B cell (primary cell): ENCODE measurements at regions of chr5 and their contacts with region 1.

Region 1: GRCh38 chr5:68215208-68215897 is at the start of gene PIK3R1:
- DNase-seq: peak; percentile 97
- ATAC-seq: peak; percentile 84
- H3K4me3 ChIP-seq: peak within 1 kb of the TSS; percentile 76 to 94 (median 88)
- H3K4me3 Mint-ChIP-seq: peak within 1 kb of the TSS; percentile 85
- H3K27ac ChIP-seq: peak within 1 kb of the TSS; percentile 90 to 92
- H3K27ac Mint-ChIP-seq: peak within 1 kb of the TSS; percentile 98
- H3K4me1 ChIP-seq: peaks cover 22 to 24% of the 10 kb centered on the region in 2 donors
- H3K4me1 Mint-ChIP-seq: peaks cover 44% of the 10 kb centered on the region
- H3K27me3 ChIP-seq: no peaks in the 10 kb centered on the region
- H3K27me3 Mint-ChIP-seq: no peaks in the 10 kb centered on the region
- CTCF ChIP-seq: peak; percentile 40
- total RNA-seq, gene PIK3R1: 63.8 and 73.3 TPM in 2 replicates

Region 2: GRCh38 chr5:67215583-67216471 is 999.5 kb before region 1 on chr5:
- CTCF ChIA-PET with region 1: no interaction called
- POLR2A ChIA-PET with region 1: interaction called, 3 read pairs
- intact Hi-C with region 1: loop called (anchors 5 kb)
- DNase-seq: peak; percentile 95
- ATAC-seq: peak; percentile 97
- H3K4me3 ChIP-seq: peak overlapping the region in 3 of 5 experiments; percentile 17 to 28 (median 20)
- H3K4me3 Mint-ChIP-seq: peak overlapping the region; percentile 85
- H3K27ac ChIP-seq: peak overlapping the region; percentile 92 to 98
- H3K27ac Mint-ChIP-seq: peak overlapping the region; percentile 100
- H3K4me1 ChIP-seq: peaks cover 34 to 39% of the 10 kb centered on the region in 2 donors
- H3K4me1 Mint-ChIP-seq: peaks cover 56% of the 10 kb centered on the region
- H3K27me3 ChIP-seq: no peaks in the 10 kb centered on the region
- H3K27me3 Mint-ChIP-seq: no peaks in the 10 kb centered on the region
- CTCF ChIP-seq: no peak

Region 3: GRCh38 chr5:68141494-68141893 is 73.9 kb before region 1 on chr5:
- CTCF ChIA-PET with region 1: no interaction called
- POLR2A ChIA-PET with region 1: no interaction called
- intact Hi-C with region 1: loop called (anchors 5 kb)
- DNase-seq: peak; percentile 55
- ATAC-seq: peak; percentile 76
- H3K4me3 ChIP-seq: no peak overlapping the region
- H3K4me3 Mint-ChIP-seq: peak overlapping the region; percentile 61
- H3K27ac ChIP-seq: no peak overlapping the region
- H3K27ac Mint-ChIP-seq: peak overlapping the region; percentile 63
- H3K4me1 ChIP-seq: peaks cover 3 to 8% of the 10 kb centered on the region in 2 donors
- H3K4me1 Mint-ChIP-seq: peaks cover 14% of the 10 kb centered on the region
- H3K27me3 ChIP-seq: no peaks in the 10 kb centered on the region
- H3K27me3 Mint-ChIP-seq: no peaks in the 10 kb centered on the region
- CTCF ChIP-seq: no peak

Region 4: DNA sequence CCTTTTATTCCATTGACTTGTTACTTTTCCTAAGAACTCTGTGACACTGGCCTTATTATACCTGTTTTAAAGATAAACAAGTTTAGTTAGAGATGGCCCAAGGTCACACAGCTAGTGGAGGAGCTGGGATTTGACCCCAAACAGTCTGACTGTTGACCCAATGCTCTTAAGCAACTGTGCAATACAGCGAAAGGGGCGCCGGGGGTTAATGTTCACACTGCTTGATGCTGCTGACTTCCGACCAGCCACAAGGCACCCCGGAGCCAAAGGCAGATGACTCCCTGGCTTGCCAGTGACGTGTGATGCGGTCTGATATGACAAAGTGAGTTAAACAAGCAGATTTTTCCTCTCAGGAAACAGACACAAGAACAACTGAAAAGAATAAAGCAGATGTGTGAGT is 24.1 kb after region 1 on chr5:
- CTCF ChIA-PET with region 1: interaction called, 13 read pairs
- POLR2A ChIA-PET with region 1: interaction called, 4 read pairs
- intact Hi-C with region 1: loop called (anchors 1 kb)
- DNase-seq: peak; percentile 85
- ATAC-seq: peak; percentile 85
- H3K4me3 ChIP-seq: peak overlapping the region in 1 of 5 experiments; percentile 23
- H3K4me3 Mint-ChIP-seq: peak overlapping the region; percentile 79
- H3K27ac ChIP-seq: peak overlapping the region; percentile 45 to 72
- H3K27ac Mint-ChIP-seq: peak overlapping the region; percentile 67
- H3K4me1 ChIP-seq: peaks cover 40 to 55% of the 10 kb centered on the region in 2 donors
- H3K4me1 Mint-ChIP-seq: peaks cover 74% of the 10 kb centered on the region
- H3K27me3 ChIP-seq: no peaks in the 10 kb centered on the region
- H3K27me3 Mint-ChIP-seq: no peaks in the 10 kb centered on the region
- CTCF ChIP-seq: no peak

Region 5: DNA sequence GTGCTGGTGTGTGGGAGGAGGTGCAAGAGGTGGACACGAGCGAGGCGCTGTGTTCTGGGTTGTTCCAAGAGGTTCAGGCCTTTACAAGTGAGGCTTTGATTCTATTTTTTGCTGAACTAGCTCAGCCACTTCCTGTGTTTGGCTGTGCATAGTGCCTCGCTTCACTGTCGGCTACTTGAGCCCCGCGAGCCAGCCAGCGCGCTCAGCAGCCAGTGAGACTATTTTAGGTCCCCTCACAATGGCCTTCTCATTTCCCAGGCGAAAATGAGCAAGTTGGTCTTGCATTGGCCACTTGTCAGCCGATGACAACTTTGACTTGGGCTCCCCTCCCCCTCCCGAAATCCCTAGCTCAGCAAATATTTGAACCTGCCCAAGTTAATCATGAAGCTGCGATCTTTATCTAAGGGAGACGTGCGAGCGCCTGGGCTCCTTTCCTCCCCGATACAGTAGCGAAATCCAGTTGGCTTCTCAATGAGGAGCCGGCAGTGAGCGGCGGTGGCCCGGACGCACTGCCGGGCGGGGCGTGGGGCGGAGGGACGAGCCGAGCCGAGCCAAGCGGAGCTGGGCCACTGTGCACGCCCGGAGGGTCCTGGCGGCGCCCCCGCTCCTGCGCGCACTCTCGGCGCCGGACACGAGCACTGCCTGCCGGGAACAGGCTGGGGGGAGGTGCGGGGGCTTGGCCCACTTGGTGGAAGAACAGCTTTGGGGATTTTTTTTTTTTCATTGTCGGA is 72.8 kb after region 1 on chr5:
- CTCF ChIA-PET with region 1: interaction called, 15 read pairs
- POLR2A ChIA-PET with region 1: no interaction called
- intact Hi-C with region 1: no loop called
- DNase-seq: peak; percentile 59
- ATAC-seq: peak; percentile 63
- H3K4me3 ChIP-seq: peak overlapping the region; percentile 47 to 75 (median 65)
- H3K4me3 Mint-ChIP-seq: peak overlapping the region; percentile 97
- H3K27ac ChIP-seq: peak overlapping the region; percentile 26 to 64
- H3K27ac Mint-ChIP-seq: peak overlapping the region; percentile 91
- H3K4me1 ChIP-seq: peaks cover 31 to 34% of the 10 kb centered on the region in 2 donors
- H3K4me1 Mint-ChIP-seq: peaks cover 40% of the 10 kb centered on the region
- H3K27me3 ChIP-seq: no peaks in the 10 kb centered on the region
- H3K27me3 Mint-ChIP-seq: no peaks in the 10 kb centered on the region
- CTCF ChIP-seq: no peak

Region 6: GRCh38 chr5:68565427-68565826 is 350.1 kb after region 1 on chr5:
- CTCF ChIA-PET with region 1: no interaction called
- POLR2A ChIA-PET with region 1: no interaction called
- intact Hi-C with region 1: no loop called
- DNase-seq: peak; percentile 79
- ATAC-seq: peak; percentile 96
- H3K4me3 ChIP-seq: peak overlapping the region in 1 of 5 experiments; percentile 29
- H3K4me3 Mint-ChIP-seq: peak overlapping the region; percentile 32
- H3K27ac ChIP-seq: peak overlapping the region; percentile 20 to 55
- H3K27ac Mint-ChIP-seq: peak overlapping the region; percentile 84
- H3K4me1 ChIP-seq: peaks cover 18 to 19% of the 10 kb centered on the region in 2 donors
- H3K4me1 Mint-ChIP-seq: peaks cover 29% of the 10 kb centered on the region
- H3K27me3 ChIP-seq: no peaks in the 10 kb centered on the region
- H3K27me3 Mint-ChIP-seq: no peaks in the 10 kb centered on the region
- CTCF ChIP-seq: no peak

Region 7: GRCh38 chr5:69369369-69370121 is 1154.2 kb after region 1 on chr5 and contains the starts of genes AK6, RAD17 and TAF9:
- CTCF ChIA-PET with region 1: no interaction called
- POLR2A ChIA-PET with region 1: no interaction called
- intact Hi-C with region 1: no loop called
- DNase-seq: peak; percentile 99
- ATAC-seq: peak; percentile 95
- H3K4me3 ChIP-seq: peak within 1 kb of the TSS; percentile 69 to 89 (median 83)
- H3K4me3 Mint-ChIP-seq: peak within 1 kb of the TSS; percentile 96
- H3K27ac ChIP-seq: peak within 1 kb of the TSS; percentile 96 to 99
- H3K27ac Mint-ChIP-seq: peak within 1 kb of the TSS; percentile 100
- H3K4me1 ChIP-seq: peaks cover 22 to 26% of the 10 kb centered on the region in 2 donors
- H3K4me1 Mint-ChIP-seq: peaks cover 41% of the 10 kb centered on the region
- H3K27me3 ChIP-seq: no peaks in the 10 kb centered on the region
- H3K27me3 Mint-ChIP-seq: no peaks in the 10 kb centered on the region
- CTCF ChIP-seq: no peak
- total RNA-seq, gene AK6: 21.7 and 25.4 TPM in 2 replicates
- total RNA-seq, gene RAD17: 39.6 and 41.0 TPM in 2 replicates
- total RNA-seq, gene TAF9: 41.6 and 42.0 TPM in 2 replicates